Common myeloid progenitor, CD34-positive (primary cell): ENCODE measurements at regions of chr14 and their contacts with region 1.

Region 1: GRCh38 chr14:39015360-39015961 is 87.6 kb downstream of the SEC23A start:
- DNase-seq: peak; percentile 39 to 68 (median 58)
- H3K4me3 ChIP-seq: no peak overlapping the region
- H3K27ac ChIP-seq: no peak overlapping the region
- H3K4me1 ChIP-seq: peaks cover 0 to 3% (median 0%) of the 10 kb centered on the region in 4 experiments
- H3K27me3 ChIP-seq: no peaks in the 10 kb centered on the region

Region 2: DNA sequence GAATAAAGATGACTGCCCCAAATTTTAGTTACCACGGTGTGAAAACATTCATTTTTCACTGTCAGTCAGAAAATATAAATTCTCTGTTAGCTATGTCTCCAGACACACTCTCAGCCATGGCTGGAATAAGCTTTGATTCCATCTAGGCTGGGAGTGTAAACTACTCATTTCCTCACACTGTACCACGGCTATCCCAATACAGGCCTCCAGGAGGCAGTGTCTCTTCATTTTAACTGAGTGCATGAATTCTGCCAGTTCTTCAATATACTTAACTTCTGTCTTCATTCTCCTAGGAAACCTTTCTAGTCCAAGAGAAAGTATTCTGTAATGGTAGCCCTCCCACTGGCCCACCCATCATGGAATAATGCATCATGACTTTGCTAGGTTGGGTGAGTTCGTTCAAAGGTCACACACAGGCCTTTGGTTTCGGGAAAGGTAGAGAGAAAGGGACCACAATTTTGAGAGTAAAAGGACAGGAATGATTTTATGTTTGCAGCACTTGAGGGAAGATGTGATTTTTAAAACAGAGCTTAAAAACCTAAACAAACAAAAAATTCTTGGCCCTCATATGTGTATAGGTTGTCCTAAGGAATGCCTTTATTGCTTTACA is 293.5 kb before region 1 on chr14:
- CTCF ChIA-PET with region 1: interaction called, 12 read pairs
- POLR2A ChIA-PET with region 1: no interaction called
- DNase-seq: peak; percentile 33 to 72 (median 64)
- H3K4me3 ChIP-seq: no peak overlapping the region
- H3K27ac ChIP-seq: no peak overlapping the region
- H3K4me1 ChIP-seq: no peaks in the 10 kb centered on the region
- H3K27me3 ChIP-seq: no peaks in the 10 kb centered on the region

Region 3: GRCh38 chr14:38951451-38951850 is 64.0 kb before region 1 on chr14:
- CTCF ChIA-PET with region 1: no interaction called
- POLR2A ChIA-PET with region 1: no interaction called
- DNase-seq: no peak
- H3K4me3 ChIP-seq: no peak overlapping the region
- H3K27ac ChIP-seq: no peak overlapping the region
- H3K4me1 ChIP-seq: no peaks in the 10 kb centered on the region
- H3K27me3 ChIP-seq: no peaks in the 10 kb centered on the region

Region 4: GRCh38 chr14:39025810-39026627 is 10.6 kb after region 1 on chr14:
- CTCF ChIA-PET with region 1: interaction called, 13 read pairs
- POLR2A ChIA-PET with region 1: no interaction called
- DNase-seq: no peak
- H3K4me3 ChIP-seq: no peak overlapping the region
- H3K27ac ChIP-seq: no peak overlapping the region
- H3K4me1 ChIP-seq: peaks cover 0 to 6% (median 3%) of the 10 kb centered on the region in 4 experiments
- H3K27me3 ChIP-seq: no peaks in the 10 kb centered on the region

Region 5: DNA sequence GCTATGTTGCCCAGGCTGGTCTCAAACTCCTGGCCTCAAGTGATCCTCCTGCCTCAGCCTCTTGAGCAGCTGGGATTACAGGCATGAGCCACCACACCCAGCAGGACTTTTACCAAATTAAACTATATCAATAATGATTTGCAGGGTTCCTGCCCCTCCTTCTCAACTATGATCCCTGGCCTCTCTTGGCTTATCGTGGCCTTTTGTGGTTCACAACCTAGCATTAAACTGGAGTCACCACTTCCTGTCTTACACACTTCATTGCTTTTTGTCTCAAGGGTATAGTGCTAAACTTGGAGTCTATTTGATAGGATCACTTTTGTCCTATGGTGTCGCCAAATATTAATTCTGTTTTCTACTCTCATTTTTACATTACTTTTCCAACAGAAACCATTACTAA is 23.1 kb after region 1 on chr14:
- CTCF ChIA-PET with region 1: no interaction called
- POLR2A ChIA-PET with region 1: no interaction called
- DNase-seq: no peak
- H3K4me3 ChIP-seq: no peak overlapping the region
- H3K27ac ChIP-seq: no peak overlapping the region
- H3K4me1 ChIP-seq: peaks cover 0 to 3% (median 0%) of the 10 kb centered on the region in 4 experiments
- H3K27me3 ChIP-seq: no peaks in the 10 kb centered on the region